PC-9 (cell line): ENCODE measurements at regions of chr21 and their contacts with region 1.

Region 1: DNA sequence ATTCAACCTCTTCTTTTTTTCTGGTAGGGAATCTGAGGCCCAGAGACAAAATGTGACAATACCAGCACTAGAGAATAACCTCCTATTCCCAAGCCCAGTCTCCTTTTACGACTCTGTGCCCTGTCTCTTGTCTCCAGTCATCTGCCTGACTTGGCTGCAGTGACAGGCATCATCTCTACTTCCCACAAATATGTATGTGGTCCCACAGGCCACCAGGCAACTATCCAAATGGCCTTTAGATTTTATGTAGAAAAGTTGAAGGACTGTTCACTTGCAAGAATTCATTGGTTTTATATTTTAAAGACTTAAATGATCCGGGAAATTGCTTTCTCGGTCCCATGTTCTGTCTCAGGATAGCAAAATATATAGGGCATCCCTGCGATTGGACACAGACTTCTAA is 11.6 kb downstream of the KRTAP24-1 start:
- DNase-seq: no peak
- H3K4me3 ChIP-seq: no peak overlapping the region
- H3K27ac ChIP-seq: no peak overlapping the region
- H3K4me1 ChIP-seq: no peaks in the 10 kb centered on the region
- H3K27me3 ChIP-seq: no peaks in the 10 kb centered on the region
- CTCF ChIP-seq: no peak

Region 2: GRCh38 chr21:30408782-30409494 is 137.8 kb after region 1 on chr21:
- CTCF ChIA-PET with region 1: no interaction called
- POLR2A ChIA-PET with region 1: no interaction called
- intact Hi-C with region 1: loop called (anchors 10 kb)
- DNase-seq: peak; percentile 46 to 49
- H3K4me3 ChIP-seq: no peak overlapping the region
- H3K27ac ChIP-seq: no peak overlapping the region
- H3K4me1 ChIP-seq: no peaks in the 10 kb centered on the region
- H3K27me3 ChIP-seq: no peaks in the 10 kb centered on the region
- CTCF ChIP-seq: peak; percentile 51; the same call in 1 of the 2 replicates

Region 3: GRCh38 chr21:30480145-30480544 is 209.0 kb after region 1 on chr21 and contains the start of gene KRTAP19-1:
- CTCF ChIA-PET with region 1: no interaction called
- POLR2A ChIA-PET with region 1: no interaction called
- intact Hi-C with region 1: no loop called
- DNase-seq: no peak
- H3K4me3 ChIP-seq: no peak within 1 kb of the TSS
- H3K27ac ChIP-seq: no peak within 1 kb of the TSS
- H3K4me1 ChIP-seq: no peaks in the 10 kb centered on the region
- H3K27me3 ChIP-seq: no peaks in the 10 kb centered on the region
- CTCF ChIP-seq: no peak
- total RNA-seq, gene KRTAP19-1: not detected in 2 replicates